ENCODE measurements at regions of chr1 and their contacts with region 1.

Region 1: DNA sequence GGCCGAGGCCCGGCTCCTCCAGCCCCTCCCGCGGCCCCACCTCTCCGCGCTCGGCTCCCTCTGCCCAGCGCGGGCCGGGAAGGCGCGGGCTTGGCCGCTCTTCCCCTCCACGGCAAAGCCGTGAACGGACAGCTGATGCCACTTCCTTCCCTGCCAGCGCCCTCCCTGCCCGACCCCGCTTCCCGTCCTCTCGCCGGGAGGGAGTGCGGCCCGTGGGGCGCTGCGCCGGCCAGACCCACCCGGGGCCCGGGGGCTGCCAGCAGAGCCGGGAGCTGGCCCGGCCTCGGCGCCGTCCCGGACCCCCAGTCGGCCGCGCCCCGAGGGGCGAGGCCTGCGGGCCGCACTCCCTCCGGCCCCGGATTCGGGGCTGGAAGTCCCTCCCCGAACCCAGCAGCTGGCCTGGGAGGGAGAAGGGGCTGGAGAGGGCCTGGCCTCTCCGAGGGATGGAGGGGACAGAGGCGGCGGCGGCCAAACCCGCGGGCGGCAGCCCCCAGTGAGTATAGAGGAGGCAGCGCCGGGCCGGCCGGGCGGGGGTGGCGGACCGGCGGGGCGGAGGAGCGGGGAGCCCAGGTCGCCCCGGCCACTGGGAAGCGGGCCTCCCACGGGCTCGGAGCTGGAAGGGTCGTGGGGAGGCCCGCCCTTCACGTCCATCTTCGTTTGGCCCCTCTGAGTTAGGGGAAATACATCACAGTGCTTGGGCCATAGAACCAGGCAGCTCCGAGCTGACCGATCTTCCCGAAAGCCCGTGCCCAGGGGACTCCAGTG is at the start of gene KIAA1614:
- DNase-seq: no peak
- H3K4me3 ChIP-seq: peak within 1 kb of the TSS; percentile 46
- CTCF ChIP-seq: no peak

Region 2: GRCh38 chr1:180954005-180954800 is 41.2 kb after region 1 on chr1:
- in situ Hi-C with region 1: no loop called
- DNase-seq: no peak
- H3K4me3 ChIP-seq: peak overlapping the region; percentile 39
- CTCF ChIP-seq: no peak

Region 3: DNA sequence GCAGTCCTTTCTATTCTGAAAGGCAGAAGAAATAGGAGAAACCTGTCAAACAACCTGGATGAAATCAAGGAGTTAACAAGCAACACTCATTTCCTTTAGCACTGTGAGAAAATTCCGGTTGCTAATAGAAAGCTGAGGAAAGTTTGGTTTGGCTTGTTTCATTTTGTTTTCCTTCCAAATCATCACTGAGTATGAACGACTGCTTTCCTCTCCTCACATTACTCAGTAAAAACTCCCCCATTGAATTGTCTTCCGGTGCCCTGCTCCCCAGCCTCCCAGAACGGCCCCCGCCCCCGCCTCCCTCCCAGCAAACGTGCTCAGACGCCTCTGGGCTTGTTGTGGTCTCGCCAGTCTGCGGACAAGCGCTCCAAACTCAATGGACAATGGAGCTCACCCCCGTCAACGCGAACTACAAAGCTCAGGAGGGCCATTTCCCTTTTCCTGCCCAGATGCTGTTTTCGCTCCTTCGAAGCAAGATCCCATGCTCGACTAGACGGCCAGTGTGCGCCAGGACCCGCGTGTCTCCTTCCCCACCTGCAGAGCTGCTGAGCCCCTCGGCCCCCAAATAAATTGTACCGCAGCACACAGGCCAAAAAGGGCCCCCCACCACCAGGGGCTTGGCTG is 108.9 kb after region 1 on chr1:
- in situ Hi-C with region 1: loop called (anchors 25 kb)
- DNase-seq: peak; percentile 45
- H3K4me3 ChIP-seq: peak overlapping the region; percentile 92
- CTCF ChIP-seq: no peak

Region 4: GRCh38 chr1:181310560-181310959 is 397.6 kb after region 1 on chr1:
- in situ Hi-C with region 1: no loop called
- DNase-seq: no peak
- H3K4me3 ChIP-seq: no peak overlapping the region
- CTCF ChIP-seq: no peak